HCT116 (cell line): ENCODE measurements at regions of chr3 and their contacts with region 1.

Region 1: GRCh38 chr3:73432023-73432705 is 192.6 kb downstream of the PDZRN3 start:
- DNase-seq: peak; percentile 15
- ATAC-seq: peak; percentile 58
- H3K4me3 ChIP-seq: no peak overlapping the region
- H3K27ac ChIP-seq: no peak overlapping the region
- H3K4me1 ChIP-seq: no peaks in the 10 kb centered on the region
- H3K27me3 ChIP-seq: peaks cover 29% of the 10 kb centered on the region
- CTCF ChIP-seq: peak; percentile 56 to 69 (median 58)
- POLR2A ChIP-seq: no peak
- RAD21 ChIP-seq: peak; percentile 59

Region 2: GRCh38 chr3:72214066-72214951 is 1217.9 kb before region 1 on chr3:
- CTCF ChIA-PET with region 1: no interaction called
- POLR2A ChIA-PET with region 1: no interaction called
- RAD21 ChIA-PET with region 1: no interaction called
- intact Hi-C with region 1: no loop called
- DNase-seq: no peak
- ATAC-seq: no peak
- H3K4me3 ChIP-seq: no peak overlapping the region
- H3K27ac ChIP-seq: no peak overlapping the region
- H3K4me1 ChIP-seq: peaks cover 0 to 4% of the 10 kb centered on the region in 2 experiments; a peak in 1 of 4 replicates
- H3K27me3 ChIP-seq: no peaks in the 10 kb centered on the region
- CTCF ChIP-seq: no peak
- POLR2A ChIP-seq: no peak
- RAD21 ChIP-seq: no peak

Region 3: GRCh38 chr3:73192035-73192738 is 240.0 kb before region 1 on chr3:
- CTCF ChIA-PET with region 1: no interaction called
- POLR2A ChIA-PET with region 1: no interaction called
- RAD21 ChIA-PET with region 1: no interaction called
- intact Hi-C with region 1: loop called (anchors 10 kb)
- DNase-seq: peak; percentile 37
- ATAC-seq: peak; percentile 93
- H3K4me3 ChIP-seq: no peak overlapping the region
- H3K27ac ChIP-seq: no peak overlapping the region
- H3K4me1 ChIP-seq: no peaks in the 10 kb centered on the region
- H3K27me3 ChIP-seq: peaks cover 4% of the 10 kb centered on the region; the same call in 1 of the 2 replicates
- CTCF ChIP-seq: peak; percentile 61 to 67 (median 66); a peak in 5 of 6 replicates
- POLR2A ChIP-seq: no peak
- RAD21 ChIP-seq: peak; percentile 34; the same call in 1 of the 2 replicates